ENCODE measurements at regions of chr14 and their contacts with region 1.

Region 1: DNA sequence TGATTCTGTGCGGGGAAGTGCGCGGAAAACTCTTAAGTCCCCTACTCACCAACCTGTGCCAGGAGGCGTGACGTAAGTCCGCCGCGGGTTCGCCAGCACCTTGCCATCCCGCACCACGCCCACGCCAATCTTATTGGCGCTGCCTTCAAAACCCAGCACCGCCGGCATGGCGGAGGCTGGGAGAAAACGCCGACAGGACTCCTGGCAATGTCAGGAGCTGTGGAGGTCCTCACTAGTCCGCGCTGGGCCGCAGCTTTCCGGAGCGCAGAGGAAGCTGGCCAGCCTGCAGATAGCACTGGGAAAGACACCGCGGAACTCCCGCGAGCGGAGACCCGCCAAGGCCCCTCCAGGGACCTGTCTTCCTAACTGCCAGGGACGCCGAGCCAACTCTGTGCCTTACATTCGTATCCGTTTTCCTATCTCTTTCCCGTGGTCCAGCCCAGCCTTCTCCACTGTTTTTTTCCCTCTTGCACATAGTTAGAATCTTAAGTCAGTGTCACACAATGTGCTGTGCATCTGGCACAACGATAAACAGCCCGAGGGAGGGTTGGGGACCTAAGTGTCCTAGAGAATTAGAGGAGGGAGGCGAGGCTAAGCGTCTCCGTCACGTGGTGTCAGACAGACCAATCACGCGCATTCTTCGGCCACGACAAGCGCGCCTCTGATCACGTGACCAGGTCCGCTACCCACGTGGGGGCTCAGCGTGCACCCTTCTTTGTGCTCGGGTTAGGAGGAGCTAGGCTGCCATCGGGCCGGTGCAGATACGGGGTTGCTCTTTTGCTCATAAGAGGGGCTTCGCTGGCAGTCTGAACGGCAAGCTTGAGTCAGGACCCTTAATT is at the starts of genes APEX1 and OSGEP:
- DNase-seq: peak; percentile 94

Region 2: GRCh38 chr14:20332788-20333493 is 121.8 kb before region 1 on chr14 and contains the start of gene CCNB1IP1:
- CTCF ChIA-PET with region 1: no interaction called
- POLR2A ChIA-PET with region 1: interaction called, 12 read pairs
- DNase-seq: peak; percentile 79

Region 3: DNA sequence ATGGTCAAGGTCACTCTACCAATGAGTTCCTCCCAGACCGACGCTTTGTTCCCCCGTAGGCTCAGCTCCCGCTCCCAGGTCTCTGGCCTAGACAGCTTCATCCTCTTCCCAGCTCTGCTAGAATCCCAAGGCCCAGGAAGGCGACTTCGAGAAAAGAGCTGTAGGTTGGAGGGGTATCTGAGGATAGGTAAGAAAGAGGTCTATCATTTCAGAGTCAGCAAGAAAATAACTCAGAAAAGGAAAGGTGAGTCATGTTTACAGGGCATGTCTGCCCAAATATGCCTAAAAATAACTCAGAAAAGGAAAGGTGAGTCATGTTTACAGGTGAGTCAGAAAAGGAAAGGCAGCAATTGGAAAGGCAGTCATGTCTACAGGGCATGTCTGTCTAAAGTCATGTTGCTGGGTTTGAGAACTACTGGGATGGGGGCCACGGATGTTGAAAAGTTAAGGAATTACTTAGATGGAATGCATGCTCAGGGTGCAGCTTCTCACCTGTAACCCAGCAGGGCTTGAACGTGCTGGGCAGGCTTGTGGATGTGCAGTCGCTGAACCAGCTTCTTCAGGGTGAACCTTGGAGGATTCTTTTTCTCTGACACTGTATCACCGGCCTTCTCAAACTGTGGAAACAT is 53.7 kb before region 1 on chr14:
- CTCF ChIA-PET with region 1: no interaction called
- POLR2A ChIA-PET with region 1: no interaction called
- DNase-seq: no peak

Region 4: GRCh38 chr14:20413045-20413799 is 41.5 kb before region 1 on chr14 and contains the start of gene TEP1:
- CTCF ChIA-PET with region 1: interaction called, 6 read pairs
- POLR2A ChIA-PET with region 1: interaction called, 58 read pairs
- DNase-seq: peak; percentile 79

Region 5: DNA sequence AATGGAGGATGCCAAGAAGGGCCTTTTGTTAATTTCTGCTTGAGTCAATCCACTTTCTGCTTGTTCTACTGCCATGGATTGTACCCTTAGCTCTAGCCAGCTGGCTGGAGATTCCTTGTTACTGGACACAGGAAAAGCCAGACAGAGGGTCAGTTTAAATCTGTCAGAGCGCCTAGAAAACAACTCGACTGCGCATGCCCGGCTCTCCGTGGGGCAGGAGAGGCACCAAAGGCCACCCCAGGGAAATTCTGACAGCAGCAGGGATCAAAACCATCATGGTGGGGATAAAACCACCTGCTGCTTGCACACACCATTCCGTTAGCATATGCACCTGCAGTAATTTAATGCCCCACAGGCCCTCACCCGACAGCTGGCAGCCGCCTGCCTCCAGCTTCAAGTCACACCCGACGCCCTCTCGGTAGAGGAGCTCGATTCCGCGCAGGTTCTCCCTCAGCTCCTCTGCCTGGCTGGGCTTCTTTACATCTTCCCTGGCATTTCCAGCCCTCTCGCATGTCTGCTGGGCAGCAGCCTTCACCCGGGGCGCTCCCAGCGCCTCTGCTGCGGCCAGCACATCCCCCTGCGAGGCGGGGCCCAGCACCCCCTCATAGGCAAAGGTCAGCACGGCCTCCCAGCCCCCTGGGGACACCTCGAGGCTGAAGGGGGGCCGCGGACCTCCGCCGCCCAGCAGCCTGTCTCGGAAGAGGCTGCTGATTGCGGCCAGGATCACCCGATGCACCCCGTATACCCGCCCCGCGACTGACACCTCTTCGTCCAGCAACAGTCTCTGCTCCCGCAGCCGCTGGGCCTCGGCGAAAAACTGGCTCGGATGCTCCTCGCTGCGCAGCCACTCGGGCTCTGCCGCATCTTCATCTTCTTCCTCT is 19.8 kb before region 1 on chr14:
- CTCF ChIA-PET with region 1: no interaction called
- POLR2A ChIA-PET with region 1: interaction called, 12 read pairs
- DNase-seq: no peak

Region 6: GRCh38 chr14:20469242-20469889 is 14.6 kb after region 1 on chr14 and contains the start of gene PNP:
- CTCF ChIA-PET with region 1: no interaction called
- POLR2A ChIA-PET with region 1: interaction called, 47 read pairs
- DNase-seq: peak; percentile 93

Region 7: DNA sequence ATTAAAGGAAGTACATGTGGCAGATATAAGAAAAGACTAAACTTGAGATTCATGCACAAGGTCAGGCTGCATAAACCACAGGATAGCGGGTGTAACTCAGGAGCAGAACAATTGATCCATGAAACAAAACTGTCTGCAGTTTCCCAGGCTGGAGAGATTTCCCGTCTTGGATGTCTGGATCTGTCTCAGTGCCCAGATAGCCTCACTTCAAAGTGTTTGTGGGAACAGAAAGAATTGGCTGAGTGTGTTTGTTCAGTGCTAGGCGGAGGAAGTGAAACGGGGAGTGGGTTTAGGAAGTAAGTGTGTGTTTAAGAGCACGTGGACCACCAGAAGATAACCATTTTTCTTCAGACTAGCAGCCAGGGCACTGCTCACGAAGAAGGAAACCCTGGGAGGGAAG is 49.2 kb after region 1 on chr14:
- CTCF ChIA-PET with region 1: no interaction called
- POLR2A ChIA-PET with region 1: no interaction called
- DNase-seq: no peak

Region 8: DNA sequence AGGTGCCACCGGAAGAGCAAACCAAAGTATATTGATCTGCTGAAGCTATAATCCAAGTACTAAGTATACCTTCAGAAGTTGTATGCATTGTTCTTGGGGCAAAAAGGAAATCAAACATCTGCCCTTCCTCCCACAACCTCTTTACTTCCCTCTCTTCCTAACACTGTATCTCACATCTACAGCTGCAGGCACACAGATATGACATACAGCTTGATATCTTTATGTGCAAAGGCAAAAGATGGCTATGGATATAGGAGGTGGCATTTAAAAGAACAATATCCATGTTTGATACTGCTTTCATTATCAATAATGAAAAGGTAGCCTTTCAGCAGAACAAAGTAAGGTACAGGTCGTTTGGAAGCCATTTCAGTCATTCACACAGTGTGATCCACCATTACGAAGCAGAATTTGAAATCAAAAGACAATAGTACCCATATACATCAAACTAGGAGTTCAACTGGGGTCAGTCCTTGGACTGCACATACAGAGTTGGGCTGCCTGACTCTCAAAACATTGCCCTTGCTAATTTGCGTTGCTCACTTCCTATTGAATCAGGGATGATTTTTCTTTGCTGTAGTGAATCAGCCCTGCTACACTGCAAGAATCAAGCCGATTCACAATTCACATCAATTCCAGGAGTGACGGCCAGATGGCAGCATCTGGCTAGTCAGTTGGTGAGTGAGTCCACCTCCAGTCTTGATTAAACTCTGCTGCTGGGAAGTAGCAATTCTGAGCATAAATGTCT is 242.7 kb after region 1 on chr14:
- CTCF ChIA-PET with region 1: no interaction called
- POLR2A ChIA-PET with region 1: no interaction called
- DNase-seq: peak; percentile 69

Measured in HEK293T (cell line).